Calu3 (cell line): ENCODE measurements at regions of chr15 and their contacts with region 1.

Region 1: GRCh38 chr15:58469432-58470353 is 37.9 kb downstream of the LIPC start:
- DNase-seq: peak; percentile 86
- H3K4me3 Mint-ChIP-seq: peak overlapping the region; percentile 9
- H3K27ac Mint-ChIP-seq: peak overlapping the region; percentile 75
- H3K4me1 Mint-ChIP-seq: peaks cover 70% of the 10 kb centered on the region
- H3K27me3 Mint-ChIP-seq: no peaks in the 10 kb centered on the region
- CTCF ChIP-seq: no peak

Region 2: GRCh38 chr15:58269455-58270414 is 200.0 kb before region 1 on chr15:
- CTCF ChIA-PET with region 1: interaction called, 6 read pairs
- intact Hi-C with region 1: loop called (anchors 1 kb)
- DNase-seq: peak; percentile 76
- H3K4me3 Mint-ChIP-seq: no peak overlapping the region
- H3K27ac Mint-ChIP-seq: peak overlapping the region; percentile 42
- H3K4me1 Mint-ChIP-seq: peaks cover 18% of the 10 kb centered on the region
- H3K27me3 Mint-ChIP-seq: no peaks in the 10 kb centered on the region
- CTCF ChIP-seq: peak; percentile 74

Region 3: GRCh38 chr15:58440158-58440910 is 29.4 kb before region 1 on chr15:
- CTCF ChIA-PET with region 1: interaction called, 12 read pairs
- intact Hi-C with region 1: loop called (anchors 1 kb)
- DNase-seq: peak; percentile 68
- H3K4me3 Mint-ChIP-seq: peak overlapping the region; percentile 30
- H3K27ac Mint-ChIP-seq: peak overlapping the region; percentile 76
- H3K4me1 Mint-ChIP-seq: peaks cover 78% of the 10 kb centered on the region
- H3K27me3 Mint-ChIP-seq: no peaks in the 10 kb centered on the region
- CTCF ChIP-seq: no peak

Region 4: GRCh38 chr15:58513726-58514336 is 44.1 kb after region 1 on chr15:
- CTCF ChIA-PET with region 1: no interaction called
- intact Hi-C with region 1: no loop called
- DNase-seq: no peak
- H3K4me3 Mint-ChIP-seq: no peak overlapping the region
- H3K27ac Mint-ChIP-seq: no peak overlapping the region
- H3K4me1 Mint-ChIP-seq: no peaks in the 10 kb centered on the region
- H3K27me3 Mint-ChIP-seq: no peaks in the 10 kb centered on the region
- CTCF ChIP-seq: no peak

Region 5: GRCh38 chr15:58528188-58528870 is 58.6 kb after region 1 on chr15:
- CTCF ChIA-PET with region 1: interaction called, 6 read pairs
- intact Hi-C with region 1: loop called (anchors 2 kb)
- DNase-seq: peak; percentile 70
- H3K4me3 Mint-ChIP-seq: peak overlapping the region; percentile 22
- H3K27ac Mint-ChIP-seq: peak overlapping the region; percentile 86
- H3K4me1 Mint-ChIP-seq: peaks cover 56% of the 10 kb centered on the region
- H3K27me3 Mint-ChIP-seq: no peaks in the 10 kb centered on the region
- CTCF ChIP-seq: no peak

Region 6: DNA sequence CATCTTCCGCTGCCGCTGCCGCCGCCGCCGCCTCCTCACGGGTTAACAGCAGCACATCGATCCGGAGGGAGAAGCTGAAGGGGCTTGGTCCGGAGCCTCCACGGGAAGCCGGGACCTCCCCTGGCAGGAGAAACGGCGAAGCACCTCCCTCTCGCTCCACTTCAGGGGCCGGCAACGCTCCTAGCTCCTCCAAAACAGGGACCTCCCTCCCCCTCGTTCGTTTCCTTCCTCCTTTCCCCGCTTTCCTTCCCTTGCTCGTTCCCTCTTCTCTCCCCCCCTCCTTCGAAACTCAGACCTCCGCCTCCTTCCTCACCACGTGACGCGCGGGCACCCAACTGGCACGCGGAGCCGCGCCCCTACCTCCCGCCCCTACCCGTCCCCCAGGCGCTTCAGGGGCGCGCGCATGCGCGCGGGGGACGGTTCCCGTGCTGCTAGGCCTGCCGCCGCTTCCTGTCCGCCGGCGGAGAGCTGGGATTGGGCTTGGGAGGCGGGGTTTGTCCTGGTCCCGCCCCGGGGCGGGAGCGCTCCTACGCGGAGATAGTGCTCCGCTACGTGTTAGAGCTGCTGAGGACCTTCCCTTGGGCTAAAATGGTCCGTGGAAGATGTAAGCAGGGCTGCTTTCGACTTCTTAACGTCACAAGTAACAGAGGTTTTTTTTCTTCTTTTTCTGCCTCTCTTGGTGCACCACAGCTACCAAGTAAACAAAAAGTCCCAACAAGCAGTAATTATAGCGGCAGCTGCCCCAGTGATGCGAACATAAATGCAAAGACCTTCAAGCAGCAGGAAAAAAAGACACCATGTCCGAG is 280.0 kb after region 1 on chr15 and contains the start of gene ADAM10:
- CTCF ChIA-PET with region 1: interaction called, 6 read pairs
- intact Hi-C with region 1: loop called (anchors 10 kb)
- DNase-seq: peak; percentile 99
- H3K4me3 Mint-ChIP-seq: peak within 1 kb of the TSS; percentile 88
- H3K27ac Mint-ChIP-seq: peak within 1 kb of the TSS; percentile 87
- H3K4me1 Mint-ChIP-seq: peaks cover 5% of the 10 kb centered on the region
- H3K27me3 Mint-ChIP-seq: no peaks in the 10 kb centered on the region
- CTCF ChIP-seq: no peak
- total RNA-seq, gene ADAM10: 407 and 474 TPM in 2 replicates